ENCODE measurements at regions of chr20 and their contacts with region 1.

Region 1: GRCh38 chr20:45436732-45437391 is 20.9 kb downstream of the PIGT start:
- DNase-seq: peak; percentile 90
- ATAC-seq: peak; percentile 99
- H3K4me3 Mint-ChIP-seq: peak overlapping the region; percentile 80
- H3K27ac Mint-ChIP-seq: peak overlapping the region; percentile 61
- H3K4me1 Mint-ChIP-seq: peaks cover 29% of the 10 kb centered on the region
- H3K27me3 Mint-ChIP-seq: peaks cover 1% of the 10 kb centered on the region

Region 2: GRCh38 chr20:45211569-45212474 is 225.0 kb before region 1 on chr20:
- CTCF ChIA-PET with region 1: no interaction called
- POLR2A ChIA-PET with region 1: no interaction called
- DNase-seq: no peak
- ATAC-seq: no peak
- H3K4me3 Mint-ChIP-seq: no peak overlapping the region
- H3K27ac Mint-ChIP-seq: no peak overlapping the region
- H3K4me1 Mint-ChIP-seq: no peaks in the 10 kb centered on the region
- H3K27me3 Mint-ChIP-seq: peaks cover 17% of the 10 kb centered on the region

Region 3: GRCh38 chr20:45311589-45312211 is 125.2 kb before region 1 on chr20:
- CTCF ChIA-PET with region 1: interaction called, 11 read pairs
- POLR2A ChIA-PET with region 1: no interaction called
- DNase-seq: peak; percentile 70
- ATAC-seq: peak; percentile 82
- H3K4me3 Mint-ChIP-seq: no peak overlapping the region
- H3K27ac Mint-ChIP-seq: no peak overlapping the region
- H3K4me1 Mint-ChIP-seq: peaks cover 9% of the 10 kb centered on the region
- H3K27me3 Mint-ChIP-seq: peaks cover 38% of the 10 kb centered on the region

Region 4: DNA sequence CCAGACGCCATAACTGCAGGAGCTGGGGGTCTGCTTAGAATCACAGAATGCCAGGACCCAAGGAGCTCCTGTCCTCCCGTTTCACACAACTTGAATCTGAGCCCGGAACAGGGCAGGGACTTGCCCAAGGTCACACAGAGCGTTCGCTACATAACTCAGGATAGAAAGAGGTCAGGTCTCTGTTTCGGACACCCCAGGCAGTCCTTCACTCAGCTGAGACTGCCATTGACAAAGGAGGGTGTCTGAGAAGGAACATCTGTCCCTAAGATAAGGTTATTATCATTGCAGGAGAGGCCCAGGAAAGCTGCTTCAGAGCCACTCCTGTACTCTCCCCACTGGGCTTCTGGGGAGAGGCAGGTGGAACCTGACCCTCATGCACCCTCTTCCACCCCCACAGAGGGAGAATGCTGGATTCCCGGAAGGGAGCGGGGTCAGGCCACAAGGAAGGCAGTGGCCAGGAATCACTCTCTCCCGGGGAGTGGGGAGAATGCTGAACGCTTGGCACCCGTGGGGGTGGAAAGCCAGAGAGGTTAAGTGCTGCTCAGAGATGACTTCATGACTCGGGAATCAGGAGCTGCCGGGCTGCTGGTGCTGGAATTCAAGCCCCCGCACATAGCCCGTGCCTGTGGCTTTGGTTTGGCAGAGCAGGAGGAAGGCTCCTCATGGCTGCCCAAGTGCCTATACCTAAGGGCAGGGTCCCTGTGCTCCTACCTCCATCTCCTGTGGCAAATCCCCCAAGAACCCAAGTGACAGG is 99.3 kb before region 1 on chr20:
- CTCF ChIA-PET with region 1: interaction called, 13 read pairs
- POLR2A ChIA-PET with region 1: no interaction called
- DNase-seq: no peak
- ATAC-seq: no peak
- H3K4me3 Mint-ChIP-seq: no peak overlapping the region
- H3K27ac Mint-ChIP-seq: no peak overlapping the region
- H3K4me1 Mint-ChIP-seq: no peaks in the 10 kb centered on the region
- H3K27me3 Mint-ChIP-seq: no peaks in the 10 kb centered on the region

Region 5: DNA sequence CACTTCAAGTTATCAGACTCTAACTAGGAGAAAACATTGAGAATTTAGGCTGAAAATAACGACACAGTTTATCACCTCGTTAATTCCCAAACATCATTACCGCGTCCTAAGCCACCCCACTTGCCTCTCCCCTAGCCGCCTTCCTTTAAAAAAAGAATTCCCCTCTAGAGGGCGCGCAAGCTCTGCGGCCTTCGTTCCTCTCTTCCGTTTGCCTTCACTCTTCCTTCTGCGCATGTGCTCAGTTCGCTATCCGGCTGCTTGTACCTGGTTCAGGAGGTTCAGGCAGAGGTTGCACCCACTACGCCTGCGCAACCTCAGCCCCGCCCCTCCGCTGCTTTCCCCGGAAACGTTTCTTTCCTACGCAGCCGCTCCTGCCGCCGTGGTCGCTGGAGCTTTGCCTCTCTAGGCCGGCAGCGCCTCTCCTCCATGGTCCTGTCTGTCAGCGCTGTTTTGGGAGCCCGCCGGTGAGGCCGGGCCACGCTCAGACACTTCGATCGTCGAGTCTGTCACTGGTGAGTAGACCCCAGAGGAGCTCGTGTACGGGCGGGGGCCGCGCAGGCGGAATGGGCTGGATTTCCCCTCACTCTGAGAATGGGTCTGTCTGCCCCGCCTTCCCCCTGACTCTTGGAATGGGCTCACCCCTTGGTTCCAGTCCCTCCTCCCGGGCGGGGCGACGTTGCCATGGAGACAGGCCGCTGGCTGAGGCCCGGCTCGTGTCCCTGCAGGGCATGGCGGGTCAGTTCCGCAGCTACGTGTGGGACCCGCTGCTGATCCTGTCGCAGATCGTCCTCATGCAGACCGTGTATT is 73.9 kb before region 1 on chr20 and contains the start of gene SYS1:
- CTCF ChIA-PET with region 1: interaction called, 606 read pairs
- POLR2A ChIA-PET with region 1: interaction called, 13 read pairs
- DNase-seq: peak; percentile 99
- ATAC-seq: peak; percentile 91
- H3K4me3 Mint-ChIP-seq: peak within 1 kb of the TSS; percentile 97
- H3K27ac Mint-ChIP-seq: peak within 1 kb of the TSS; percentile 93
- H3K4me1 Mint-ChIP-seq: peaks cover 61% of the 10 kb centered on the region
- H3K27me3 Mint-ChIP-seq: no peaks in the 10 kb centered on the region
- total RNA-seq, gene SYS1: 28.0 to 30.8 TPM

Region 6: DNA sequence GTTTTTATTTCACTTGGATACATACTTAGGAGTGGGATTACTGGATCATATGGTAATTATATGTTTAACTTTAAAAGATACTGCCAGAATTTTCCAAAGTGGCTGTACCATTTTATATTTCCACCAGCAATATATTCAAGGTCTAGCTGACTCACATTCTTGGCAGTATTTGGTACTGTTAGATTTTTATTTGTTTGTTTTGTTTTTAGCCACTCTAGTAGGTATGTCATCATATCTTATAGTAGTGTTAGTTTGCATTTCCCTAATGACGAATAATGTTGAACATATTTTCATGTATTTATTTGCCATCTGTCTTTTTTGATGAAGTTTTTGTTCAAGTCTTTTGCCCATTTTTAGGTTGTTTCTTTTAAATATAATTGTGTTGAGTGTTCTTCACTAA is 53.7 kb before region 1 on chr20:
- CTCF ChIA-PET with region 1: interaction called, 606 read pairs
- POLR2A ChIA-PET with region 1: no interaction called
- DNase-seq: no peak
- ATAC-seq: no peak
- H3K4me3 Mint-ChIP-seq: no peak overlapping the region
- H3K27ac Mint-ChIP-seq: no peak overlapping the region
- H3K4me1 Mint-ChIP-seq: no peaks in the 10 kb centered on the region
- H3K27me3 Mint-ChIP-seq: no peaks in the 10 kb centered on the region

Region 7: DNA sequence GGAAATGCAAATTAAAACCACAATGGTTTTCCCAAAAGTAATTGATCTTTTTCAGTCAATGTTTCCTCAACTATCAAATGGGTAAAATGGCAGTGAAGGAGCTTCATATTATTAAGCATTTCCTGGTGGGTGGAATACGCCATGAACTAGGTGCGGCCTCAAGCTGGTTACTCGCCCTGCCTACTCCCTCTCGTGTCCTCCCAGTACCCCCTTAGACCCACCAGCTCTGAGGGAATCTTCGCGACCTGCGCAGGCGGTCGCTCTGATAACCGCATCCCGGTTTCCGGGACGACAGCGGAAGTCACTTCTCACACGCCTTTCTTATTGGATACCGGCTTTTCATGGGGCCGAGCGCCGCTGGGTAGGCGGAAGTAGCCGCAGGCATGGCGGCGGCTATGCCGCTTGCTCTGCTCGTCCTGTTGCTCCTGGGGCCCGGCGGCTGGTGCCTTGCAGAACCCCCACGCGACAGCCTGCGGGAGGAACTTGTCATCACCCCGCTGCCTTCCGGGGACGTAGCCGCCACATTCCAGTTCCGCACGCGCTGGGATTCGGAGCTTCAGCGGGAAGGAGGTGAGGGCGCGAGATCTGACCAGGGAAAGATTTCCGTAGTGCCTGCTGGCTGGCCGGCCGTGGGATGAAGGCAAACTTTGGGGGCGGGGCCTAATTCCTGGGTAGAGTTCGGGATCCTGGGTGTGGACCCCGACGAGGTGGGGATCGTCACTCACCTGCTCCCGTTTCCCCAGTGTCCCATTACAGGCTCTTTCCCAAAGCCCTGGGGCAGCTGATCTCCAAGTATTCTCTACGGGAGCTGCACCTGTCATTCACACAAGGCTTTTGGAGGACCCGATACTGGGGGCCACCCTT is 20.9 kb before region 1 on chr20 and contains the start of gene PIGT:
- CTCF ChIA-PET with region 1: interaction called, 34 read pairs
- POLR2A ChIA-PET with region 1: interaction called, 7 read pairs
- DNase-seq: peak; percentile 92
- ATAC-seq: peak; percentile 97
- H3K4me3 Mint-ChIP-seq: peak within 1 kb of the TSS; percentile 93
- H3K27ac Mint-ChIP-seq: peak within 1 kb of the TSS; percentile 90
- H3K4me1 Mint-ChIP-seq: peaks cover 42% of the 10 kb centered on the region
- H3K27me3 Mint-ChIP-seq: peaks cover 2% of the 10 kb centered on the region
- total RNA-seq, gene PIGT: 59.6 to 62.4 TPM

Region 8: GRCh38 chr20:45592574-45593189 is 155.8 kb after region 1 on chr20:
- CTCF ChIA-PET with region 1: no interaction called
- POLR2A ChIA-PET with region 1: no interaction called
- DNase-seq: peak; percentile 50
- ATAC-seq: peak; percentile 60
- H3K4me3 Mint-ChIP-seq: no peak overlapping the region
- H3K27ac Mint-ChIP-seq: no peak overlapping the region
- H3K4me1 Mint-ChIP-seq: no peaks in the 10 kb centered on the region
- H3K27me3 Mint-ChIP-seq: peaks cover 23% of the 10 kb centered on the region

Region 9: DNA sequence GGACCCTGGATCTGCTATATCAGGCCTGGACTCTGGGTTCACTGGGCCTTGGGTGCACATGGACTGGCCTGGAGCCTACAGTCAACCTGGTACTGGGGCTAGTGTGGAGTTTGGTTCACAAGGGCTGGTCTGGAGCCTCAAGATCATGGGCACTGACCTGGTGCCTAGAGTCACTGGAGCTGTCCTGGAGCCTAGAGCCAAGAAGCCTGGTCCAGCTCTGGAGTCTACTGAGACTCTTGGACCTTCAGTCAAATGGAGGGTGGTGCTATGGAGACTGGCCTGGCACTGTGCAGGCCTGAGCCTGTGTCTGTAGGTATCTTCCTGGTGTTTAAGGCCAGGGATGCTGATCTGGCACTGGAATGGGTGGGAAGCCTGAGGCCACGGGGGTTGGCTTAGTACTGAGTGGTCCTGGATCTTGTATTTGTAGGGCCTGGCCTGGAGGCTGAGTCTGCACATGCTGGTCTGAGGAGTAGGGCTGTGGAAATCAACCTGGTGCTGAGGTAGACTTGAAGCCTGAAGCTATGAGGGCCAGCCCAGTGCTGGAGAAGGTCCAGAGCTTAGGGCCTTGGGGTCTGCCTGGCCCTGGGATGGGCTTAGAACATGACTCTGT is 210.7 kb after region 1 on chr20:
- CTCF ChIA-PET with region 1: no interaction called
- POLR2A ChIA-PET with region 1: no interaction called
- DNase-seq: no peak
- ATAC-seq: no peak
- H3K4me3 Mint-ChIP-seq: no peak overlapping the region
- H3K27ac Mint-ChIP-seq: no peak overlapping the region
- H3K4me1 Mint-ChIP-seq: no peaks in the 10 kb centered on the region
- H3K27me3 Mint-ChIP-seq: peaks cover 2% of the 10 kb centered on the region

Region 10: DNA sequence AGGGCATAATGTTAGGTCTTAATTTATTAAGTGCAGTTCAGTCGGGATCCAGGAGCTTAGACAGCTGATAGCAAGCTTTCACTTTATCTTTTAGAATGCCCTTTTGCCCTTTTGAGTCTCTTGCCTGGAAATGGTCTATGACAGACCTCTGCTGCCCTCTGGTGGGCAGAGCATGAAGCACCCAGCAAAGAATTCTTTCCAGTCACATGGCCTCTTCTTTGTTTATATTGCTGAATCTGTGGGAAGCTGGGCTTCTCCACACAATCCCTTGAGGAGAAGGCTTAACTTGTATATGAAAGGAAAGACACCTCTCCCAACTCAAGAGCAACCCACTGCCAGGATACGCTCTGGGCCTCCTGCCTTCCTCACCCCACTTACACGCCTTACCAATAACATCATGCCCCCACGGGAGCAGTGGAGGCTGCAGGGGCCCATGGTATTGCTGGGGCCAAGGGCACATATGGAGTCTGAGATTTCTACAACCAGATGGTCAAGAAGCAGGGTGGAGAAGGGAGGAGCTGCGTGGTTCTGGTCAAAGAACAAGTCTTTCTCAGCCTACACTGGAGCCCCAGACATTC is 334.4 kb after region 1 on chr20:
- CTCF ChIA-PET with region 1: interaction called, 18 read pairs
- POLR2A ChIA-PET with region 1: no interaction called
- DNase-seq: peak; percentile 85
- ATAC-seq: peak; percentile 78
- H3K4me3 Mint-ChIP-seq: no peak overlapping the region
- H3K27ac Mint-ChIP-seq: no peak overlapping the region
- H3K4me1 Mint-ChIP-seq: peaks cover 5% of the 10 kb centered on the region
- H3K27me3 Mint-ChIP-seq: peaks cover 11% of the 10 kb centered on the region

Measured in activated CD8-positive, alpha-beta T cell treated with anti-CD3 and anti-CD28 coated beads, Interleukin-2, amount 10 ng/mL, durations not matched to agents 7 days and 5 days (primary cell).